H1 (cell line): ENCODE measurements at regions of chr17 and their contacts with region 1.

Region 1: DNA sequence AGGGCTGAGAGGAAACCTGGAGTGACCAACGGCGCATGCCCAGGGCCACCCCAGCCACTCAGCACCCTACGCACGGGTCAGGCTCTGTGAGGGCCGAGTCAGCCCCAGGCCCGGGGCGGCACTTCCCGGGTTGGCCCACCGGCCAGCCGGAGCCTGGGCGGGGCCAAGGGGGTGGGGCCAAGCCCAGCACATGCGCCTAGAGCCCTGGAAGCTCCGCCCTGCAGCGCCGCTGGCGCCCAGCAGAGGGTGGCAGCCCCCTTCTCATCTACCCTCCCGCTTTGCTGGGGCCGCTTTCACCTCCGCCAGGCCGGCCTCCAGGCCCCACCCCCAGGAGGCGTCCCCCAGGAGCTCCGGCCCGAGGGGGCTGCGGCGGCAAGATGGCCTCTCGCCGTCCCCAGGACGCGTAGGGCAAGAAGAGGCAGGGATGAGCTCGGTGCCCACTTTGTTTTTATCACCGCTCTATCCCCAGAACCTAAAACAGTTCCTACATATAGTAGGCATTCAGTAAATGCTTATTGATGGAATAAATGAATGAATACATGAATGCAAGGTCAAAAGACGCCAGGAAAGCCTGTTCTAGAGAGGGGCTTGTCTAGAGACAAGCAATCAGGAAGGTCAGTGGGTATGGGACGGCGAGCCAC is 31.3 kb downstream of the MYO18A start:
- DNase-seq: peak; percentile 92 to 99
- H3K4me3 ChIP-seq: peak overlapping the region; percentile 7 to 57 (median 26); a peak in 5 of 8 replicates
- H3K27ac ChIP-seq: no peak overlapping the region
- H3K4me1 ChIP-seq: peaks cover 0 to 10% (median 6%) of the 10 kb centered on the region in 4 experiments; a peak in 6 of 7 replicates
- H3K27me3 ChIP-seq: no peaks in the 10 kb centered on the region
- CTCF ChIP-seq: peak; percentile 95
- EP300 ChIP-seq: no peak
- POLR2A ChIP-seq: peak in 1 of 2 experiments; percentile 67; a peak in 1 of 3 replicates
- RAD21 ChIP-seq: peak; percentile 97 to 98

Region 2: GRCh38 chr17:29018788-29019474 is 130.0 kb before region 1 on chr17:
- CTCF ChIA-PET with region 1: no interaction called
- POLR2A ChIA-PET with region 1: no interaction called
- DNase-seq: no peak
- H3K4me3 ChIP-seq: no peak overlapping the region; a peak in 1 of 8 replicates
- H3K27ac ChIP-seq: no peak overlapping the region
- H3K4me1 ChIP-seq: peaks cover 20 to 37% (median 32%) of the 10 kb centered on the region in 4 experiments
- H3K27me3 ChIP-seq: peaks cover 0 to 3% (median 0%) of the 10 kb centered on the region in 4 experiments; a peak in 1 of 7 replicates
- CTCF ChIP-seq: no peak
- EP300 ChIP-seq: no peak
- POLR2A ChIP-seq: no peak
- RAD21 ChIP-seq: no peak

Region 3: DNA sequence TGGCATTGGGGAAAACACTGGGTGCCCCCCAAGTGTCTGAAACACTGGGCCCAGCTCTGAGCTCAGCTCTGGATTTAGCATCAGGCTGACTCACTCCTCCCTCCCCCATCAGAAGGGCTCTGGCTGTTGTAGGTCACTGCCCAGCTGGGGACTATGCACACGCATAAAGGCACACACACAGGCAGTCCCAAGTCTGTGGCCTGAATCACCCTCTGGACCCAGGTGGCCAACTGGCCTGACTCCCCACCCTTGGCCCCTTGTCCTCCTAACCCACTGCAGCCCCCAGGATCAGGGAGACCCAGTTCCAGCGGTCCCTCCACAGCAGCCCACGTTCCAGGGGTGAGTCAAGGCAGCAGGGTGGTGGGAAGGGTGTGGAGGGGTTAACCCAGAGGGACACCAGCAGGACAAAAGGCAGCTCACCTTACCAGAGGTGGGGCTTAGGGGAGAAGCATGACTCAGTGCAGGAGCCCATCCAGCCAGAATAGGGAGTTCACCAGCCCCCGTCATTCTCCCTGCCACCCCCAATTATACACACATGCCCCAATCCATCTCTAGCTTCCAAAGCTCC is 15.7 kb before region 1 on chr17:
- CTCF ChIA-PET with region 1: interaction called, 118 read pairs
- POLR2A ChIA-PET with region 1: no interaction called
- DNase-seq: no peak
- H3K4me3 ChIP-seq: peak overlapping the region in 3 of 4 experiments; percentile 13 to 34 (median 18); a peak in 5 of 8 replicates
- H3K27ac ChIP-seq: peak overlapping the region; percentile 77
- H3K4me1 ChIP-seq: peaks cover 12 to 22% (median 16%) of the 10 kb centered on the region in 4 experiments
- H3K27me3 ChIP-seq: no peaks in the 10 kb centered on the region
- CTCF ChIP-seq: no peak
- EP300 ChIP-seq: no peak
- POLR2A ChIP-seq: no peak
- RAD21 ChIP-seq: no peak

Region 4: GRCh38 chr17:29241015-29241963 is 92.4 kb after region 1 on chr17:
- CTCF ChIA-PET with region 1: interaction called, 10 read pairs
- POLR2A ChIA-PET with region 1: no interaction called
- DNase-seq: peak in 1 of 2 experiments; percentile 67
- H3K4me3 ChIP-seq: peak overlapping the region in 1 of 4 experiments; percentile 4; a peak in 2 of 8 replicates
- H3K27ac ChIP-seq: peak overlapping the region; percentile 51
- H3K4me1 ChIP-seq: peaks cover 7 to 13% (median 9%) of the 10 kb centered on the region in 4 experiments; a peak in 6 of 7 replicates
- H3K27me3 ChIP-seq: no peaks in the 10 kb centered on the region; a peak in 1 of 7 replicates
- CTCF ChIP-seq: no peak
- EP300 ChIP-seq: no peak
- POLR2A ChIP-seq: 0 out of 3 replicates have a peak, but pooled peaks of 1 of the 2 experiments have one; percentile 44
- RAD21 ChIP-seq: no peak

Region 5: DNA sequence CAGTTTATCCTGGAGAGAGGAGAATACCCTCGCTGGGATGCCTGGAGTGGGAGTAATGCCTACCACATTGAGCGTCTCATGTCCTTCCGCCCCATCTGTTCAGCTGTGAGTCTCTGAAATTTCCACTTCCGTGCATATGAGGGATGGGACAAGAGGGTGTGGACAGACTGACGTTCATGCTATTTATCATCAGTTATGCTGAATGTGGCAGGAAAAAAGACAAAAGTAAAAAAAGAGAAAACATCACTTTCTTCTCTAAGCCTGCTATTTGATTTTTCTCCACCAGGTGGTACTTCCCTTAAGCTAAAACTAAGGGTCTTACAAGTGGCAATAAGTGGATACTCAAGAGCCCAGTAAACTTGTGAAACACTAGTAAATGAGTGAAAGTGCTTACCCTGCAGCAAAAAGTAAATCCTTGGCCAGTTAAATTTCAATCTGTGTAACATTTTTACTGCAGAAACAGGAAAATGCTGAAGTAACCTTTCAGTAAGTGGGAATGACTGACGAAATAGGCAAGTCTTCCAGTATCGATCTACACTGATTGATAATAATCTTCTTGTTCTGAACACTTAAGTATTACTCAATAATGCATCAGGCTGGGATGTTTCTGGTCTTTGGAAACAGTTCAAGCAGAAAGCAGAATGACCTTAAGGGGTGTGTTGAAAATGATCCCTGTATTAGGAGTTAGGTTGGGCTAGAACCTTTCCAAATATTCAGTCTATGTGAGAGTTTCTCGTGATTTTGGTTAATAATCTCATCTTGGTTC is 103.4 kb after region 1 on chr17:
- CTCF ChIA-PET with region 1: interaction called, 19 read pairs
- POLR2A ChIA-PET with region 1: no interaction called
- DNase-seq: no peak
- H3K4me3 ChIP-seq: no peak overlapping the region
- H3K27ac ChIP-seq: no peak overlapping the region
- H3K4me1 ChIP-seq: peaks cover 0 to 3% (median 0%) of the 10 kb centered on the region in 4 experiments; a peak in 1 of 7 replicates
- H3K27me3 ChIP-seq: no peaks in the 10 kb centered on the region
- CTCF ChIP-seq: peak in 2 of 3 experiments; percentile 28 to 56; a peak in 2 of 4 replicates
- EP300 ChIP-seq: no peak
- POLR2A ChIP-seq: no peak
- RAD21 ChIP-seq: peak; percentile 37